PC-3 (cell line): ENCODE measurements at regions of chr14 and their contacts with region 1.

Region 1: GRCh38 chr14:79369359-79370332 is 841.7 kb downstream of the DIO2 start:
- DNase-seq: peak; percentile 90
- ATAC-seq: peak; percentile 97
- H3K4me3 ChIP-seq: no peak overlapping the region
- H3K27ac ChIP-seq: peak overlapping the region; percentile 65
- H3K4me1 ChIP-seq: peaks cover 15% of the 10 kb centered on the region
- H3K27me3 ChIP-seq: no peaks in the 10 kb centered on the region
- CTCF ChIP-seq: no peak; the same call in 1 of the 2 replicates

Region 2: GRCh38 chr14:78576437-78577166 is 793.0 kb before region 1 on chr14:
- CTCF ChIA-PET with region 1: no interaction called
- POLR2A ChIA-PET with region 1: no interaction called
- intact Hi-C with region 1: no loop called
- DNase-seq: no peak
- ATAC-seq: no peak
- H3K4me3 ChIP-seq: no peak overlapping the region
- H3K27ac ChIP-seq: no peak overlapping the region
- H3K4me1 ChIP-seq: no peaks in the 10 kb centered on the region
- H3K27me3 ChIP-seq: no peaks in the 10 kb centered on the region
- CTCF ChIP-seq: no peak

Region 3: GRCh38 chr14:79411403-79412174 is 41.9 kb after region 1 on chr14:
- CTCF ChIA-PET with region 1: no interaction called
- POLR2A ChIA-PET with region 1: no interaction called
- intact Hi-C with region 1: loop called (anchors 1 kb)
- DNase-seq: peak; percentile 62
- ATAC-seq: peak; percentile 76
- H3K4me3 ChIP-seq: no peak overlapping the region
- H3K27ac ChIP-seq: peak overlapping the region; percentile 61
- H3K4me1 ChIP-seq: peaks cover 39% of the 10 kb centered on the region
- H3K27me3 ChIP-seq: no peaks in the 10 kb centered on the region
- CTCF ChIP-seq: no peak

Region 4: DNA sequence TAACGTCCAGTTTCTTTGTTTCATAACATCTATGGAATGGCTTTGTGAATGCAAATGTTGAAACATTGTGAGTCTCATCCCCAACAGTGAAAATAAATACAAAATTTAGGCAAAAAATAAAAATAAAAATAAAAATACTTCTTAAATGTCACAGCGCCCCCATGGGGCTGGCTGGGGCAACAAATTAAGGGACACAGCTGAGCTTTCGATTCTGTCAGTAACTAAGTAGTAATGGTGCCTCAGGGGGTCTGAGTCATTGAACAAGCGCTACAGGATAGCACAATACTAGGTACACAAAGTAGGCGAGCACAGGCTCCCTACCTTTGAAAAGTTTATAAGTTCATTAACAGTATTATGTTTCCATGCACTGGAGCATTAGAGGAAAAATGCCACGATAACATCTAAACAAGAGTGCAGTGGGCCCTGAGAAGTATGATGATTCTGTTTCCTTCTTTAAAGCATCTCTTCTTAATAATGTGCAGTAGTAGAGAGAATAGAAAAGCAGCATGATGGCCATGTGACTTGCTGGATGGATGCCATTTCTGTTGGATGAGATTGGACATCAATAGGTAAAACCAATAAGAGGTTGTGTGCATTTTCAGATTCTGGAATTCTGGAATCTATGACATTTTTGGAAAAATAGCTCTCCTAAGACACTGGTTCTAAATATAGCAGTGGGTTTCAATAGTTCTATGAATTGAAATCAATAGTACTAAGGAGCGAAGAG is 174.5 kb after region 1 on chr14:
- CTCF ChIA-PET with region 1: no interaction called
- POLR2A ChIA-PET with region 1: no interaction called
- intact Hi-C with region 1: loop called (anchors 5 kb)
- DNase-seq: peak; percentile 82
- ATAC-seq: peak; percentile 97
- H3K4me3 ChIP-seq: no peak overlapping the region
- H3K27ac ChIP-seq: peak overlapping the region; percentile 25; the same call in 1 of the 2 replicates
- H3K4me1 ChIP-seq: peaks cover 8% of the 10 kb centered on the region; the same call in 1 of the 2 replicates
- H3K27me3 ChIP-seq: no peaks in the 10 kb centered on the region
- CTCF ChIP-seq: peak; percentile 72